ENCODE measurements at regions of chr4 and their contacts with region 1.

Region 1: DNA sequence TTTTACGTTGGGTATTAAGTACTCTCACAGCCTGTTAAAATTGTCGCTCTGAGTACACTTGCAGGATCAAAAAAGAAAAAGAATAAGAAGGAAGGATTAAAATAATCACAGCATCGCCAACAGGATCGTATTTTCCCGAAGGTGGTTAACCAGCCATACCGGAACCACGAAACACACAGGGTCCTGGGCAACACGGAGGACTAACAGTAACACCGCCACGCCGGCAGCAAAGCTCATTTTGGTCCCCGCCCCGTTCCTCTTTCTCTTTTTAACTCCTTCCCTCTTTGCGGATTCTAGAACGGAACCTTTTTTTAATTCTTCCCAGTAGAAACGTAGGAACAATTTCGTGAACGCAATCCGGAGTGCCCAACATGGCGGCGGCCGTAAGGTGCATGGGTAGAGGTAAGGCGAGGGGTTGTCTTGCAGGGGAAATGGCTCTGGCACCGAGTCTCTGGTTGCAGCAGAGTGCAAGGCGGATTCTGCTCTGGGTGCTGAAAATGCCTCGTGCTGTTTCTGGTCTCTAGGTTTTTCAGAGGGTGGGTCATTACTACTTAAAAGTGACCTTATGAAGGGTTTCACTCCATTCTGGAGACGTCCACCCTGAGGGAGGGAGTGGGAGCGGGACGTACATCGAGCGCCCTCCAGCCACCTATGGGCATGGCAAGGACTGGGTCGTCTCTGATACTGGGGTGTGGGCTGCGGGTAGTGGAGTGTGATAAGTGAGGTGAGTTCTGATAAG is at the start of gene MRPL1:
- DNase-seq: peak; percentile 92
- H3K4me3 Mint-ChIP-seq: peak within 1 kb of the TSS; percentile 86
- H3K27ac Mint-ChIP-seq: peak within 1 kb of the TSS; percentile 99
- H3K4me1 Mint-ChIP-seq: peaks cover 58% of the 10 kb centered on the region
- H3K27me3 Mint-ChIP-seq: peaks cover 4% of the 10 kb centered on the region
- total RNA-seq, gene MRPL1: 46.2 to 51.1 TPM

Region 2: DNA sequence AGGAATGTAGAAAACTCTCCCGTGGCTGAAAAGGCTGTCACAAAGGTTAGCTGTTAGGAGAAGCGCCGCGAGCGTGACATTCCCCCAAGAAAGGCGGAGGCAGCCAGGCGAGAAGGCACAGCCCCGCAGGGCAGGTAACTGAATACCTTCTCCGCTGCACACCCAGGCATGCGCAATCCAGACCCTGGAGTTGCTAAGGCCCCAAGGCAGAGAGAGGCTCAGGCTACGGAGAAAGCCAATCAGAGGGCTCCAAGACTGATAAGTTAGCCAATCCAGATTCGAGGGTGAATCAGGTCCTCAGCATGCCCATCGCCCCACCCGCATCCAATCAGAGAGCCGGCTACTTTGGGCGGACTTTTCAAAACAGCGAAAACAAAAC is 706.1 kb before region 1 on chr4:
- CTCF ChIA-PET with region 1: no interaction called
- POLR2A ChIA-PET with region 1: no interaction called
- intact Hi-C with region 1: loop called (anchors 5 kb)
- DNase-seq: peak; percentile 97
- H3K4me3 Mint-ChIP-seq: peak overlapping the region; percentile 95
- H3K27ac Mint-ChIP-seq: peak overlapping the region; percentile 94
- H3K4me1 Mint-ChIP-seq: peaks cover 27% of the 10 kb centered on the region
- H3K27me3 Mint-ChIP-seq: no peaks in the 10 kb centered on the region

Region 3: GRCh38 chr4:77715414-77716290 is 147.0 kb before region 1 on chr4:
- CTCF ChIA-PET with region 1: no interaction called
- POLR2A ChIA-PET with region 1: no interaction called
- intact Hi-C with region 1: loop called (anchors 5 kb)
- DNase-seq: no peak
- H3K4me3 Mint-ChIP-seq: no peak overlapping the region
- H3K27ac Mint-ChIP-seq: peak overlapping the region; percentile 54
- H3K4me1 Mint-ChIP-seq: peaks cover 24% of the 10 kb centered on the region
- H3K27me3 Mint-ChIP-seq: no peaks in the 10 kb centered on the region

Region 4: GRCh38 chr4:77800483-77801259 is 62.0 kb before region 1 on chr4:
- CTCF ChIA-PET with region 1: interaction called, 11 read pairs
- POLR2A ChIA-PET with region 1: interaction called, 19 read pairs
- intact Hi-C with region 1: loop called (anchors 5 kb)
- DNase-seq: no peak
- H3K4me3 Mint-ChIP-seq: peak overlapping the region; percentile 42
- H3K27ac Mint-ChIP-seq: peak overlapping the region; percentile 85
- H3K4me1 Mint-ChIP-seq: peaks cover 70% of the 10 kb centered on the region
- H3K27me3 Mint-ChIP-seq: no peaks in the 10 kb centered on the region

Region 5: DNA sequence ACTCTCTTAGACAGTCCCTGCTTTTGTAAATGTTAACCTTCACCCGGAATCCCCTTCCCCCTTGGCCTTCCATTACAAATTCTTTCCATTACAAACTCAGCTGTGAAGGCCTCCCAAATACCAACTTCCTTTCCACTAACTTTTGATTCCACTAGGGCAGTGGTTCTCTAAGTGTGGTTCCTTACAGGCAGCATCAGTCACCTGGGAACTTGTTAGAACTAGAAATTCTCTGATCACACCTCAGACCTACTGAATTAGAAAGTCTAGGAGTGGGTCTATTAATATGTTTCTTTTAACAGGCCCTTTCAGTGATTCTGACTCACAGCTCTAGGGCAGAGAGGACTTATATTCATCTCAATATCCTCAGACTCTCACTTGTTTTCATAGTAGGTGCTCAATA is 19.0 kb before region 1 on chr4:
- CTCF ChIA-PET with region 1: interaction called, 4 read pairs
- POLR2A ChIA-PET with region 1: interaction called, 14 read pairs
- intact Hi-C with region 1: loop called (anchors 1 kb)
- DNase-seq: no peak
- H3K4me3 Mint-ChIP-seq: no peak overlapping the region
- H3K27ac Mint-ChIP-seq: peak overlapping the region; percentile 60
- H3K4me1 Mint-ChIP-seq: peaks cover 25% of the 10 kb centered on the region
- H3K27me3 Mint-ChIP-seq: no peaks in the 10 kb centered on the region

Measured in activated CD4-positive, alpha-beta memory T cell treated with anti-CD3 and anti-CD28 coated beads for 36 hours (primary cell).